ENCODE measurements at regions of chr9 and their contacts with region 1.

Region 1: DNA sequence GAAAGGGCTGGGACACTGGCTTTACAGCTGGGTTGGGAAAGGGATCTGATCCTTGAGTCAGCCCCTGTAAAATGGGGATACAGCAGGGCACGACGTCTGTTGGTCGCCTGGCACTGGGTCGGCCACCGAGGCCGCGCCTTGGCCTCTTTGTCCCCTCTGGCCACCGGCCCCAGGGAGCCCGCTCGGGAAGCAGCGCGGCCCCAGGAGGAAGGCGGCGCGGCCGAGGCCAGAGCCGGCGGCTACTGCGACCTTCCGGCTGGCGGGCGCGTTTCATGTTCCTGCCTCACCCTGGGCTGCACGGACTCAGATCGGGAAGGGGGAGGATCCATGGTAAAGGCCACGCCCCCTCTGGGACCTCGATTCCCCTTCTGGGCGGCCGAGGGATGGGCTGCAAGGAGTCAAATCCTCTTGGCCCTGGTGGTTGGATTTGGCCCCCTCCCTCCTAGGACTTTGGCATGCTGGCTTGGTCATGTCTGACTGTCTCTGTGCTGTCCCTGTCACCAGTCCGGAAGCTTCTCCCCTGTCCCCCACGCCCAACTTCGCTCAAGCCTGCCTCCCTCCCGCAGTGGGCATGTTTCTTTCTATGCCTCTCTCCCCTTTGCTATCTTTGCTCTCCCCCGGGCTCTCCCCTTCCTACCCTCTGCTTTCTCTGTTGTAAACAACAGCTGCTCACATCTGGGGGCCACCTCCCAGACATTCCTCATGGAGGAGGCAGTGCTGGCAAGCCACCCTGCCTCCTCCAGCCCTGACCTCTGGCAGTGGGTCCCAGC is 25.8 kb downstream of the FPGS start:
- DNase-seq: peak; percentile 94 to 95
- ATAC-seq: peak; percentile 90
- H3K4me3 ChIP-seq: no peak overlapping the region
- H3K27ac ChIP-seq: peak overlapping the region; percentile 29 to 70
- H3K4me1 ChIP-seq: no peaks in the 10 kb centered on the region
- H3K27me3 ChIP-seq: no peaks in the 10 kb centered on the region

Region 2: DNA sequence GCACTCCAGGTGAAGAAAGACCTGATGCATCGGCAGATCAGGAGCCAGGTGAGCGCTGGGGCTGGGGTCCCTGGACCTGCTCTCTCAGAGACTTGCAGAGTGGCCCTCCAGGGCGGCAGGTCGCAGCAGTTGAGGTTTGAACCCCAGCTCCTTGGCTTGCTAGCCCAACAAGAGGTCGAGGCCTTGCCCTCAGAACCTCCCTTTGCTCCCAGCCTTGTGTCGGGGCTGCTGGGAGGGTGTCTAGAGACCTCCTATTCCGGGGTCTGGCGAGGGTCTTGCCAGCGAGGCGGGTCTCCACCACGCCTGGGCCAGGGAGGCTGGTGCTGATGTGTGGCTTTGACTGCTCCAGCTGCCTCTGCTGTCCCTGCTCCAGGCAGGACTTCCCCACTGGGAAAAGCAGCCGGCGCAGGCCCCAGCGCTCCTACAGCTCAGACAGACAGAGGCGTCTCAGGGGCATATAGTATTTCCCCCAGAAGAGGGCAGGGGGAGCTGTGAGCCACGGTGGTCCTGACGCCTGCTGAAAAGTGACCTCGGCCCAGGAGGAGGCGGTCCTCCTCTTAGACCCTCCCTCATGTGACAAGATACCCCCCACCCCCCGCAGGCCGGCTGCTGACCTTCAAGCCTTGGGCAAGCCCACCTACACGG is 338.9 kb before region 1 on chr9:
- intact Hi-C with region 1: no loop called
- DNase-seq: no peak
- ATAC-seq: no peak
- H3K4me3 ChIP-seq: no peak overlapping the region
- H3K27ac ChIP-seq: no peak overlapping the region
- H3K4me1 ChIP-seq: no peaks in the 10 kb centered on the region
- H3K27me3 ChIP-seq: no peaks in the 10 kb centered on the region

Region 3: DNA sequence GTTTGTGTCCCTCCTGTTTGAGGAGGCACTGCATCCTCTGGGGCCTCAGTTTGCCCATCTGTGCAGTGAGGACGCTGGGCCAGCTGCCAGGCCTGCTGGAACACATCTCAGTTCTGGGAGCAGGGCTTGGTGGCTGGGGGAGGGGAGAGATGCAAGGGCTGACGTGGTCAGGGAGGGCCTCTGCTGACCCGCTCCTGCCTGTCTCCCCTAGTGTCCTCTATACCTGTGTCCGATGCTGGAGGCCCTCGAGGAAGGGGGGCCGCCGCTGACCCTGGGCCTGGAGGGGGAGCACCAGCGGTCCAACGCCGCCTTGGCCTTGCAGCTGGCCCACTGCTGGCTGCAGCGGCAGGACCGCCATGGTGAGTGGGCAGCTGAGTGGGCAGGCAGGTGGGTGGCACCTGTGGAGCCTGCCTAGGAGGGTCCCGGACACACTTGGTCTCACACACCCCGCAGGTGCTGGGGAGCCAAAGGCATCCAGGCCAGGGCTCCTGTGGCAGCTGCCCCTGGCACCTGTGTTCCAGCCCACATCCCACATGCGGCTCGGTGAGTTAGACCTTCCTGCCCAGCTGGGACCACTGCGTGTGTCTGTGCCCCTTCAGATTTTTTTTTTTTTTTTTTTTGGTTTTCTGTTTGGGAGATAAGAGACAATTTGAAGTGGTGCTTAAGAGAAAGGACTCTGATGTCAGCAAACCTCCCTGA is 20.0 kb before region 1 on chr9:
- intact Hi-C with region 1: loop called in 1 of 2 experiments (anchors 1 kb)
- DNase-seq: no peak
- ATAC-seq: no peak
- H3K4me3 ChIP-seq: no peak overlapping the region
- H3K27ac ChIP-seq: no peak overlapping the region
- H3K4me1 ChIP-seq: no peaks in the 10 kb centered on the region
- H3K27me3 ChIP-seq: no peaks in the 10 kb centered on the region

Region 4: GRCh38 chr9:127862075-127863011 is 33.9 kb after region 1 on chr9:
- intact Hi-C with region 1: loop called in 1 of 2 experiments (anchors 5 kb)
- DNase-seq: peak; percentile 86 to 94
- ATAC-seq: peak; percentile 67
- H3K4me3 ChIP-seq: no peak overlapping the region
- H3K27ac ChIP-seq: peak overlapping the region in 1 of 2 donors; percentile 66
- H3K4me1 ChIP-seq: no peaks in the 10 kb centered on the region
- H3K27me3 ChIP-seq: no peaks in the 10 kb centered on the region

Region 5: GRCh38 chr9:127869310-127870152 is 41.1 kb after region 1 on chr9:
- intact Hi-C with region 1: loop called (anchors 5 kb)
- DNase-seq: peak; percentile 95 to 98
- ATAC-seq: peak; percentile 89
- H3K4me3 ChIP-seq: no peak overlapping the region
- H3K27ac ChIP-seq: peak overlapping the region in 1 of 2 donors; percentile 3
- H3K4me1 ChIP-seq: no peaks in the 10 kb centered on the region
- H3K27me3 ChIP-seq: no peaks in the 10 kb centered on the region

Region 6: DNA sequence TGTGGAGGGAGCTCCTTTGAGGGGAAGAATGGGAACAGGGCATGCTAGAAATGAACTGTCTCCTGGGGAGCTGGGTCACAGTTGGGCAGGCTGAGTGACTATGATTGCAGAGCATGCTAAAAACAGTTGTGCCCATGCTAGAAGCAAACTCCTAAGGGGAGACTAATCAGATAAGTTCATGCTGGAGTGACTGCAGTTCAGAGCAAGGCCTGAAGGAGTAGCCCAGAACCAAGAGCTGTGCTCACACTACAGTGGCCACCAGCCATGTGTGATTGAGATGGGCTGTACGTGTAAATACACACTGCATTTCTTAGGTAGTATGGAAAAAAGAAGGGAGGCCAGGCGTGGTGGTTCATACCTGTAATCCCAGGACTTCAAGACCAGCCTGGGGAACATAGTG is 59.3 kb after region 1 on chr9:
- intact Hi-C with region 1: no loop called
- DNase-seq: no peak
- ATAC-seq: no peak
- H3K4me3 ChIP-seq: no peak overlapping the region
- H3K27ac ChIP-seq: no peak overlapping the region
- H3K4me1 ChIP-seq: no peaks in the 10 kb centered on the region
- H3K27me3 ChIP-seq: no peaks in the 10 kb centered on the region